Left cardiac atrium (tissue), 4 donors: ENCODE measurements at regions of chr12 and their contacts with region 1.

Region 1: GRCh38 chr12:104858611-104859543 is 99.2 kb downstream of the SLC41A2 start:
- DNase-seq: no peak
- ATAC-seq: peak in 1 of 2 donors; percentile 38

Region 2: DNA sequence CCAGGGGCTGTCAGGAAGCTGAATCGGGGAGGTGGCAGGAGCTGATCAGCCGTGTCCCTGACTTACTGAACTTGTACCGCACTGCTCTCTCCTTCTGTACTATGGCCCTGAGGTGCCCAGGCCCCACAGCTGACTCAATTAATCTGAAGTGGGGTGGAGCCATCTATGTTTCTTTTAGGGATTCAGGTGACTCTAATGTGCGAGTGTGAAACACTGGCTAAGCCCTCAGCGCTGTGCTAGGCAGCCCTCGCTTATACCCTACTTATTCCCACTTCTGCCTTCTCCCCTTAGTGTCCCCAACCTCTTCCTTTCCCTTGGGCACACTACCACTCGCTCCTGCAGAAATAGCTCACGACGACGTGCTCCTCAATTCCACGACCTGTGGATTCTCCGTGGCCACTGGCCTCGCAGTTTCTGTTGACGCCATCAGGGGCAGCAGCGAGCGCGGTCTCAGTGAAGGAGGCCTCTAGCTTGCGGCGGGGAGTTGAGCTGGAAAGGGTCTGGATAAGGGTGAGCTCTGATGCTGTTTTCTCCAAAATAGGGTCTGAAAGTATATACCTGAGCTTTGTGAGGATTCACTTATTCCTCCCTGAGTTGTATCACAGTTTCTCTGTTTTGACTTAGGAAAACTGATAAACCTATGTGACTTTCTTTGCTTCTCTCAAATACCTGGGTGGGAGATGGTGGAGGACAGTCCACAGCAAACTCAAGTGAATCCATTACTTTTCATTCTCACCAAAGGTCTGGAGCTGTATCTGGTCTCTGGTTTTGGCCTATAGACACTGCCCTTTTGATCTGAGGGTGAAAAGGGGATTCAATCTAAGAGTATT is 68.4 kb before region 1 on chr12:
- intact Hi-C with region 1: loop called in 1 of 2 experiments (anchors 10 kb)
- DNase-seq: peak; percentile 63
- ATAC-seq: peak in 1 of 2 donors; percentile 49